Endothelial cell of umbilical vein (primary cell): ENCODE measurements at regions of chr11 and their contacts with region 1.

Region 1: DNA sequence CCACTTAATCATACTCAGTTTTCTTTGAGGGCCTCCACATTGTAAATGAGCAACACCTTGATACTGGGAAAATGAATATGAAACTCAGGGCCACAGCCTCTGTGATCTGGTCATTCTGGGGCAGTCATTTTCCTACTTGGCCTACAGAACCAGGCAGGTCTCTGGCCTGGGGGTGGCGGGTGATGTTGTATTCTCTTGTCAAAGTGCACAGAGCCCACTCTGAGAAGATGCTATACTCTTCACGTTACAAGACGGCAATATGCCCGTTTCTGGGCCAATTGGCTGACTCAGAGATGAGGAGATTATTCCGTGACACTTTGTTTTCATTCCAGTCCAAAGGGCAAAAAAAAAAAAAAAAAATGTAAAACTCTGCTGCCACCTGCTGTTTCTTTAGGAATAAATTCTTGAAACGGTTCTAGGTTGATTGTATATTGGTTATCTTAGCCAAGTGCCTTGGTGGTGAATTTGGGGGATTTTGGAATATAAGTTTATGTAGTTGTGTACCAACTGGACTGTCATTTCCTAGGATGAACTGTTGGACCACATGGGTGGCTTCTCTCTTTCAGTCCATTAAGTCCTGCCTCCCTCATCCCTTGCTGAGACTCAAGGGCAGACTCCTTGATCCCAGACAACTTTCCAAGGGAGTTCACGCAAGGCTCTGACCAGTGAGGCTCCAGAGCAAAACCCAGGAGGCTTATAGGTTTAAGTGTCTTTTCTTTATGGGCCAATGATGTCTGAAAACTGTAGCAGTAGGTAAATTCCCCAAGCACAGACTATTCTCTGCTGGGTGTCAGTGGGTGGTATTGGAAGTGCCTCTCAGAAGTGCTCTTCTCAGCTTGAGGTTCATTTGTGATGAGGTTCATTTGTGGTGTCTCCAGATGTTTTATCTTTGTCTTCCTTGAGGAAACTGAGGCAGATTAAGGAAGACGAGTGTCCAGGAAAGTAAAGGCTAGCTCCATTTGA is 18.2 kb downstream of the ADM start:
- DNase-seq: peak; percentile 92
- H3K4me3 ChIP-seq: no peak overlapping the region
- H3K27ac ChIP-seq: peak overlapping the region; percentile 28
- H3K4me1 ChIP-seq: peaks cover 57% of the 10 kb centered on the region
- H3K27me3 ChIP-seq: no peaks in the 10 kb centered on the region
- CTCF ChIP-seq: peak; percentile 28 to 46
- POLR2A ChIP-seq: no peak

Region 2: GRCh38 chr11:9527481-9528140 is 795.5 kb before region 1 on chr11:
- CTCF ChIA-PET with region 1: no interaction called
- POLR2A ChIA-PET with region 1: no interaction called
- dilution Hi-C with region 1: no loop called
- intact Hi-C with region 1: loop called (anchors 10 kb)
- DNase-seq: peak; percentile 96
- H3K4me3 ChIP-seq: peak overlapping the region in 1 of 3 experiments; percentile 20
- H3K27ac ChIP-seq: peak overlapping the region; percentile 82
- H3K4me1 ChIP-seq: peaks cover 27% of the 10 kb centered on the region
- H3K27me3 ChIP-seq: no peaks in the 10 kb centered on the region
- CTCF ChIP-seq: no peak
- POLR2A ChIP-seq: peak; percentile 21

Region 3: DNA sequence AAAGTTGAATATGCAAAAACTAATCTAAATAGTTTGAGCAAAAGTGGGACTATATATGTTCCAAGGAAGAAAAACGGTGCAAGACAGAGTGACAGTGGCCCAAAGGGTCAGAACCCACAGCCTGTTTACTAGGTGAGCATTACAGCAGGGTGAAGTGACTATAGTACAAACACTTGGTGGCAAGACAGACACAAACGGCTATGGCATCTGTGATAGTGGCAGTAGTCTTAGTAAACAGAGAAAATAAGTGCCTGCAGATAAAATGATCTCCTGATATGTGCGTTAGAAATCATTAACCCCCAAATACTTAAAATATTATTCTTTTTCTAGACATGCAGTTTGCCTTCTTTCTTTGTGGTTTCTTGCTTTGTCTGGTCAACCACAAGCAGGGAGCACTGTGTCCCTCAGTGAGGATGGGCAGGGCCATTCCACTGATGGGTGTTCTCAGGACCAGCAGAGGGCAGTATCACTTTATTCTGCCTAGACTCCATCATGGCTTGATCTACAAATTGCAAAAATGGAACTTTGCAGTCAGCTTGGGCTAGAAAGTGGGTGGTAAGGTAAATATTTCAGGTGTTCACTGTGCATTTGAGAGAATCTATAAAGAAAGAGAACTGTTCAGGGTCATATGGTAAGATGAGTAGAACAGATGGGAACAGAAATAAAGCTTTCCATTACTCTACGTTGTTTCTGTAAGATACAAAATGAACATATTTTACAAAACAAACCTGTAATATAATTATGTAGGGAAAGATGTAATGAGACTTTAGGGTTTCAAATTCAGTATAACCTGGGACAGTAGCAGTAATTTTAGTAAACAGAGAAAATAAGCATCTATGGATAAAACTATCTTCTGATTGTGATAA is 461.0 kb before region 1 on chr11:
- CTCF ChIA-PET with region 1: no interaction called
- POLR2A ChIA-PET with region 1: no interaction called
- dilution Hi-C with region 1: no loop called
- intact Hi-C with region 1: loop called (anchors 1 kb)
- DNase-seq: peak; percentile 74
- H3K4me3 ChIP-seq: no peak overlapping the region
- H3K27ac ChIP-seq: no peak overlapping the region
- H3K4me1 ChIP-seq: peaks cover 40% of the 10 kb centered on the region
- H3K27me3 ChIP-seq: no peaks in the 10 kb centered on the region
- CTCF ChIP-seq: peak; percentile 66 to 74
- POLR2A ChIP-seq: no peak

Region 4: GRCh38 chr11:9972989-9973388 is 350.1 kb before region 1 on chr11:
- CTCF ChIA-PET with region 1: interaction called, 3 read pairs
- POLR2A ChIA-PET with region 1: no interaction called
- dilution Hi-C with region 1: no loop called
- intact Hi-C with region 1: loop called (anchors 1 kb)
- DNase-seq: peak; percentile 74
- H3K4me3 ChIP-seq: no peak overlapping the region
- H3K27ac ChIP-seq: no peak overlapping the region
- H3K4me1 ChIP-seq: peaks cover 14% of the 10 kb centered on the region
- H3K27me3 ChIP-seq: no peaks in the 10 kb centered on the region
- CTCF ChIP-seq: peak; percentile 58 to 61
- POLR2A ChIP-seq: no peak

Region 5: GRCh38 chr11:10181811-10182210 is 141.3 kb before region 1 on chr11:
- CTCF ChIA-PET with region 1: interaction called, 10 read pairs
- POLR2A ChIA-PET with region 1: no interaction called
- dilution Hi-C with region 1: no loop called
- intact Hi-C with region 1: no loop called
- DNase-seq: peak; percentile 48
- H3K4me3 ChIP-seq: no peak overlapping the region
- H3K27ac ChIP-seq: no peak overlapping the region
- H3K4me1 ChIP-seq: no peaks in the 10 kb centered on the region
- H3K27me3 ChIP-seq: no peaks in the 10 kb centered on the region
- CTCF ChIP-seq: peak; percentile 14 to 16
- POLR2A ChIP-seq: no peak

Region 6: DNA sequence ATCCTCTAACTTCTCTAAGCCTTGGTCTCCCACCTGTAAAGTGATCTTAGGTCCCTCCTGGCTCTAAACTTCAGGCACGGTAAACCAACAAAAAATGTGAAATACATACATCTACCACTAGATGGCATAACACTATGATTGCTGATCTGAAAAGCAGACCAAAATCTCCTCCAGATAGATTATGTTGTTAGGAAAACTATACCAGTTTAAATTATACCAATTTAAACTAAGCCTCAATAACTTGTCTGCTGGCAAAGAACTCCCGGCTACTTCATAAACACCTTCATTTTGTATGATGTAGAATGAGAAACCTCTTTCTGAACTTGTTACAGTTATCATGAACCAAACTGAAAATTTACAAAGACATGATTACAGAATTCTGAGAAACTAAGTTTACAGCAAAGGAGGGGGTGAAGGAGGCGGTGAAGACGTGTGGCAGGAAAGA is 115.0 kb before region 1 on chr11:
- CTCF ChIA-PET with region 1: no interaction called
- POLR2A ChIA-PET with region 1: no interaction called
- dilution Hi-C with region 1: no loop called
- intact Hi-C with region 1: loop called (anchors 1 kb)
- DNase-seq: peak; percentile 73
- H3K4me3 ChIP-seq: no peak overlapping the region
- H3K27ac ChIP-seq: no peak overlapping the region
- H3K4me1 ChIP-seq: no peaks in the 10 kb centered on the region
- H3K27me3 ChIP-seq: no peaks in the 10 kb centered on the region
- CTCF ChIP-seq: peak; percentile 39 to 41
- POLR2A ChIP-seq: no peak

Region 7: GRCh38 chr11:10653926-10654810 is 331.1 kb after region 1 on chr11:
- CTCF ChIA-PET with region 1: no interaction called
- POLR2A ChIA-PET with region 1: no interaction called
- dilution Hi-C with region 1: no loop called
- intact Hi-C with region 1: loop called (anchors 5 kb)
- DNase-seq: peak; percentile 73
- H3K4me3 ChIP-seq: no peak overlapping the region
- H3K27ac ChIP-seq: no peak overlapping the region
- H3K4me1 ChIP-seq: peaks cover 21% of the 10 kb centered on the region
- H3K27me3 ChIP-seq: no peaks in the 10 kb centered on the region
- CTCF ChIP-seq: peak; percentile 72 to 78
- POLR2A ChIP-seq: no peak